ENCODE measurements at regions of chr10 and their contacts with region 1.

Region 1: GRCh38 chr10:60964257-60965235 is 20.6 kb upstream of the RHOBTB1 start:
- DNase-seq: peak; percentile 38 to 59
- H3K4me3 ChIP-seq: no peak overlapping the region
- H3K27ac ChIP-seq: peak overlapping the region; percentile 2 to 58
- H3K4me1 ChIP-seq: no peaks in the 10 kb centered on the region
- H3K27me3 ChIP-seq: no peaks in the 10 kb centered on the region
- CTCF ChIP-seq: peak; percentile 53 to 77 (median 69)
- POLR2A ChIP-seq: no peak

Region 2: DNA sequence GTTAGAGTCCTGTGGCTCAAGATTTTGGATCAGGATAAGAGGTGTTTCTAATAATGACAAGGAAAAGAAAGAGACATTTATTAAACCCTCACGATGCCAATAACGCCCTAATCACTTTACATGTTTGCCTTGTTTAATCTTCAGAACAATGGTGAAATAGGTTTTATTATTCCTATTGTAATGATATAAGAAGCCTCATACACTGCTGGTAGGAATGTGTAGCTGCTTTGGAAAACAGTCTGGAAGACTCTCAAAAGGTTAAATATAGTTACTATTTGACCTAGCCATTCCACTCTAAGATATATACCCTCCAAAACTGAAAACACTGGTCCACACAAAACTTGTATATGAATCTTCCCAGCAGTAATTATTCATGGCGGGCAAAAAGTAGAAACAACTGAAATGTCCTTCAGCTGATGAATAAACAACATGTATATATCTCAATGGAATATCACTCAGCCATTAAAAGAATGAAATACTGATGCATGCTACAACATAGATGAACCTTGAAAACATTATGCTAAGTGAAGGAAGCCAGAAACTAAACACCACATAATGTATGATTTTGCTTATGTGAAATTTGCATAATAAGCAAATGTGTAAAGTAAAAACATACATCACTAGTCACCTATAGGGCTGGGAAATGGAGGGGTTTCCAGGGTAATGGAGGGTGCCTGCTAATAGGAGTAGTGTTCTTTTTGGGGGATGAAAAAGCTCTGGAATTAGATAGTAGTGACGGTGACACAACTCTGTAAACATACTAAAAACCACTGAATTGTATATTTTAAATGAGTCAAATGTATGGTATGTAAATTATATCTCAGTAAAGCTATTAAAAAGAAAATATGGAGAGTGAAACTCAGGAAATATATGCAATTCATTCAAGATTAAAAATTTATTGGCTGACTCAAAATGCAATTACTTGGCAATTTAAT is 498.0 kb before region 1 on chr10:
- intact Hi-C with region 1: no loop called
- DNase-seq: no peak
- H3K4me3 ChIP-seq: no peak overlapping the region
- H3K27ac ChIP-seq: no peak overlapping the region
- H3K4me1 ChIP-seq: no peaks in the 10 kb centered on the region
- H3K27me3 ChIP-seq: no peaks in the 10 kb centered on the region
- CTCF ChIP-seq: no peak
- POLR2A ChIP-seq: no peak

Region 3: GRCh38 chr10:61000769-61001730 is 36.5 kb after region 1 on chr10:
- intact Hi-C with region 1: loop called (anchors 1 kb)
- DNase-seq: peak in 1 of 2 donors; percentile 51
- H3K4me3 ChIP-seq: peak overlapping the region; percentile 19 to 72 (median 57)
- H3K27ac ChIP-seq: peak overlapping the region in 1 of 2 donors; percentile 6
- H3K4me1 ChIP-seq: no peaks in the 10 kb centered on the region
- H3K27me3 ChIP-seq: no peaks in the 10 kb centered on the region
- CTCF ChIP-seq: no peak
- POLR2A ChIP-seq: no peak

Region 4: DNA sequence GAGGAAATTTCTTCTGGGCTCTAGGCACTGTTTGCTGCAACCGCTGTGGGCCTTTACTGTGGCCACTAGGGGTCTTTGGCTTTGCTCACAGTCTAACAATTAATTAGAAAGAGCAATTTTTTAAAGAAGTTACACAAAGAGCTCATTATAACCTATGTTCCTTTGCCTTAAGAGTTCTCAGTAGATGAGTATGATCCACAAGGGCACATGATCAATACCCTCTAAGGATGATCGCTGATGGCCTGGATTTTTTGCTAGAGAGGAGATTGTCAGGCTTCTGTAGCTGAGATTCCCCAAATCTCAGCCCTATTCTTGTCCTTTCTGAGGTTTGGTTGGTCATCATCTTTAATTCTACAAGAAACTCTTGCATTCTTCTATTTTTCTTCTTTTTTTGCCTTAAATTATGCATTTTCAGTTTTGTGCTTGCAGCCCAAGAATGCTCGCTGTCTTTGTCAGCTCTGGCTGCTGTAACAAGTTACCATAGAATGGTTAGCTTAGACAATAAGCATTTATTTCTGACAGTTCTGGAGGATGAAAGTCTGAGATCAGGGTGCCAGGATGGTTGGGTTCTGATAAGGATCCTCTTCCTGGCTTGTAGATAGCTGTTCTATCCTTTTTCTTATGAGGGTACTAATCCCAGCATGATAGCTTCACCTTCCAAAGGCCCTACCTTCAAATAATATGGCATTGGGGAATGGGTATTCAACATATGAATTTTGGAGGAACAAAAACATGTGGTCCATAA is 60.5 kb after region 1 on chr10:
- intact Hi-C with region 1: no loop called
- DNase-seq: no peak
- H3K4me3 ChIP-seq: no peak overlapping the region
- H3K27ac ChIP-seq: no peak overlapping the region
- H3K4me1 ChIP-seq: no peaks in the 10 kb centered on the region
- H3K27me3 ChIP-seq: no peaks in the 10 kb centered on the region
- CTCF ChIP-seq: peak in 2 of 3 donors; percentile 29 to 31
- POLR2A ChIP-seq: no peak

Region 5: DNA sequence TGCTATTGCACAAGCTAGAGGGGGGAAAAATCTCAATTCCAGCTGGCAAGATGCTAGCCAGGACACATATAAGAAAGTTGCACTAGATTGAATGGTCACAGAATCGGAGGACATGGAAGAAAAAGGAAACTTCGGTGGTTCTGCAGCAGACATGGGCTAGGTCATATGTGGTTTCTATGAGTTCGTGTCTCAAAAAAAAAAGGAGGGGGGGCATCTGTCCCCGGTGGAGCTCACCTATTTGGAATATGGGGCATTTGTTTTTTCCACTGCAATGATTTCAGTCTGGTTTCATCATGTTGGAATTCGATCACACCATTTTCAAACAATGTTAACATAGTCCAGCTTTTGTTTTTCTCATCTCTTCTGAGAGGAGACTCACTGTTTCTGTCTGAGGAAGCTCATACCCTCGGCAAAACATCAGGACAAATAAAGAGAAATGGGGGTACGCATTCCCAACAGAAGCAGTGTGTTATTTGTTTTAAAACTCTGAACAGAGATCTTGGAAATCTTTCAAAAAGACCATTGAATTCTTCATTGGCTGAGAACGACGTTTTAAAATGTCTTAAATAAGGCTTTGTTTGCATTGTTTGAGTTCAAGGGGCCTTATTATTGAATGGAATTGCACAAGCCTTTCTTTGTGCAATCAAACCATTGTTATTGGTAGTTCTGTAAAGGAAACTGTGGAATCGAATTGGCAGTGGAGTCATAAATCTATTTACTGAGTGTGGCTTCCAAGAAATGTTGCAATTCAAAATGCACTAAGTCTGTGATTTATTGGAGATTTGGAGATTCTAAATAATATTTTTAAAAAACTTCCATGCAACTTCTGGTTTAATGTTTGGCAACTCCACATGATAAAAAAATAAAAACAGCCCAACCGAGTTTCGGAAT is 1130.9 kb after region 1 on chr10:
- intact Hi-C with region 1: loop called (anchors 10 kb)
- DNase-seq: no peak
- H3K4me3 ChIP-seq: peak overlapping the region in 1 of 3 donors; percentile 32
- H3K27ac ChIP-seq: peak overlapping the region; percentile 71 to 89
- H3K4me1 ChIP-seq: peaks cover 7 to 29% of the 10 kb centered on the region in 2 donors
- H3K27me3 ChIP-seq: no peaks in the 10 kb centered on the region
- CTCF ChIP-seq: no peak
- POLR2A ChIP-seq: no peak